GM10248 (cell line): ENCODE measurements at regions of chr11 and their contacts with region 1.

Region 1: DNA sequence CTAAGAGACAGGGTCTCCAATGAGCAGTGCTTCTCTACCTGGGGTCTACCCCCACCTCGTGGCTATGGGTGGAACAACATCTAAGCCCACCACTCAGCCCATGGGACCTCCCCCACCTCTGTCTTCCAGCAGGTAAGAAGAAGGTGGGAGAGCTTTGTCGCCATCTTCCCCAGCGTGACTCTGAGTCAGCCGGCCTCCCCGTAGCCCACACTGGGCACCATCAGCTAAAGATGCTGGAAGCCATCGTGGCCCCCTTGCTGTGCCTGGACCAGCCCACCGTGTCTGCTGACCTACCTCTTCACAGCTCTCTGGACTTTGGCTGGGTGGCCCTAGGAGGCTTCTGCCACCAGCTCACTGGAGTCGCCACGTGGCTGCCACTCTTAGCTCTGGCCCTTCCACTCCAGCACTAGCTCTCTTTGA is 954 bp downstream of the C11orf86 start:
- DNase-seq: peak; percentile 51
- CTCF ChIP-seq: peak; percentile 37

Region 2: GRCh38 chr11:66546966-66547661 is 428.9 kb before region 1 on chr11:
- CTCF ChIA-PET with region 1: no interaction called
- POLR2A ChIA-PET with region 1: no interaction called
- DNase-seq: no peak
- CTCF ChIP-seq: no peak

Region 3: GRCh38 chr11:66987158-66987620 is 11.1 kb after region 1 on chr11:
- CTCF ChIA-PET with region 1: interaction called, 16 read pairs
- POLR2A ChIA-PET with region 1: no interaction called
- DNase-seq: no peak
- CTCF ChIP-seq: no peak

Region 4: DNA sequence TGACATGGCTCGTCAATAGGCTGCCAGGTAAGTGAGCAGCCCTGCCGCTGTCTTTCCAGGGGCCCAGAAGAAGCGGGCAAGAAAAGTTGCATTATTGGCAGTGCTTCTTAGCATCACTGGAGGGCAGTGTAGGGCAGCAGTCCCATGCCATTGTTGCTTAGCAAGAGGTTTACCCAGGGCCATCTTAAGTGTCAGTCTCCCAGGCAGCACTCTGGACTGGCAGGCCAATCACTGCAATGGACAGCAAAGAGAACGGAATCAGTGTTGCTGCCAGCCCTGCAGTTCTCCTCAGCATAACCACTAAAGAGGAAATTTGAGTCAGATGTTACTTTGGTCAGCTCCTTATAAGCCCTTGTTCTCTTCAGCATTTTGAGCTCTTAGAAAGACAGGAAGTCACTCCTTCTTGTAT is 276.8 kb after region 1 on chr11:
- CTCF ChIA-PET with region 1: no interaction called
- POLR2A ChIA-PET with region 1: no interaction called
- DNase-seq: no peak
- CTCF ChIP-seq: peak; percentile 23